Activated CD4-positive, alpha-beta memory T cell treated with anti-CD3 and anti-CD28 coated beads, Interleukin-2, amount 10 ng/mL, durations not matched to agents 7 days and 5 days (primary cell): ENCODE measurements at regions of chr14 and their contacts with region 1.

Region 1: GRCh38 chr14:101809671-101810514 is 48.4 kb downstream of the PPP2R5C start:
- DNase-seq: peak; percentile 90
- H3K4me3 Mint-ChIP-seq: peak overlapping the region; percentile 83
- H3K27ac Mint-ChIP-seq: peak overlapping the region; percentile 96
- H3K4me1 Mint-ChIP-seq: peaks cover 48% of the 10 kb centered on the region
- H3K27me3 Mint-ChIP-seq: no peaks in the 10 kb centered on the region

Region 2: GRCh38 chr14:101707068-101707842 is 102.6 kb before region 1 on chr14:
- CTCF ChIA-PET with region 1: interaction called, 18 read pairs
- POLR2A ChIA-PET with region 1: interaction called, 54 read pairs
- DNase-seq: peak; percentile 68
- H3K4me3 Mint-ChIP-seq: no peak overlapping the region
- H3K27ac Mint-ChIP-seq: peak overlapping the region; percentile 73
- H3K4me1 Mint-ChIP-seq: peaks cover 45% of the 10 kb centered on the region
- H3K27me3 Mint-ChIP-seq: peaks cover 15% of the 10 kb centered on the region

Region 3: GRCh38 chr14:101761032-101761880 is 48.6 kb before region 1 on chr14 and contains the start of gene PPP2R5C:
- CTCF ChIA-PET with region 1: interaction called, 5 read pairs
- POLR2A ChIA-PET with region 1: interaction called, 39 read pairs
- DNase-seq: peak; percentile 88
- H3K4me3 Mint-ChIP-seq: peak within 1 kb of the TSS; percentile 83
- H3K27ac Mint-ChIP-seq: peak within 1 kb of the TSS; percentile 73
- H3K4me1 Mint-ChIP-seq: peaks cover 39% of the 10 kb centered on the region
- H3K27me3 Mint-ChIP-seq: peaks cover 12% of the 10 kb centered on the region
- total RNA-seq, gene PPP2R5C: 338 to 348 TPM

Region 4: GRCh38 chr14:101791919-101792572 is 17.8 kb before region 1 on chr14:
- CTCF ChIA-PET with region 1: interaction called, 5 read pairs
- POLR2A ChIA-PET with region 1: interaction called, 85 read pairs
- DNase-seq: no peak
- H3K4me3 Mint-ChIP-seq: peak overlapping the region; percentile 47
- H3K27ac Mint-ChIP-seq: peak overlapping the region; percentile 41
- H3K4me1 Mint-ChIP-seq: peaks cover 21% of the 10 kb centered on the region
- H3K27me3 Mint-ChIP-seq: no peaks in the 10 kb centered on the region

Region 5: DNA sequence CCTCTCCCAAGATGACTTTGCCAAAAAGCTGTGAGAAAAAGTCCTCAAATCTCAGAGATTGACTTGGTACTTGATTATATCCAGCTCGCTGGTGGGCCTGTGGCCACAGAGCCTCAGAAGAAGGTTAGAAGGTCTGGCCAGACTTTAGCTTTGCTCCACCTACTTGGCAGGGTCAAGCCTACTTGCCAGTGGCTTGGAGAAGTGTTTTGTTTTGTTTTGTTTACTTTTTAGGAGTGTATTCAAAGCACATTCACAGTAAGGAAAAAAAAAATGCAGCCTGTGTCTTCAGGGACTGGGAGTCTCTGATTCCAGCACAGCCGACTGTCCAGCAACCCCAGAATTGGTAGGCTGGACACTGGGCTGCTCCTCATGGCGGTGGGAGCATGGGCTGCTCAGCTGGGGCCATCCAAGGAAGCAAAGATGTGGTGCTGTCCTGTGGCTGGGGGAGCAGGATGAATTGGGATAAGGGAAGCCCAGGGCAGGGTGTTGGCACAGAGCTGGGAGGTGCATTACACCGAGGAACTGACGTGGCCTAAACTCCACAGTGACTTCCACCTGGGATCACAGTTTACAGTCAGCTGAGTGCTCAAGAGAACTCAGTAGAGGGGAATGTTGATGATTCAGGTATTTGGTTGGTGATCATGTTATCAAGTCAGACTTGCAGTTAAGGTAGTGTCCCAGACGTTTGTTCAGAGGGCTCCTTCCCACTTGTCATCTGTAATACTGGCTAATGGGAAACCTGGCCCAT is 25.1 kb after region 1 on chr14:
- CTCF ChIA-PET with region 1: interaction called, 3 read pairs
- POLR2A ChIA-PET with region 1: interaction called, 17 read pairs
- DNase-seq: no peak
- H3K4me3 Mint-ChIP-seq: no peak overlapping the region
- H3K27ac Mint-ChIP-seq: no peak overlapping the region
- H3K4me1 Mint-ChIP-seq: peaks cover 78% of the 10 kb centered on the region
- H3K27me3 Mint-ChIP-seq: no peaks in the 10 kb centered on the region

Region 6: GRCh38 chr14:101947906-101948665 is 138.2 kb after region 1 on chr14:
- CTCF ChIA-PET with region 1: no interaction called
- POLR2A ChIA-PET with region 1: interaction called, 15 read pairs
- DNase-seq: peak; percentile 100
- H3K4me3 Mint-ChIP-seq: peak overlapping the region; percentile 89
- H3K27ac Mint-ChIP-seq: peak overlapping the region; percentile 85
- H3K4me1 Mint-ChIP-seq: peaks cover 26% of the 10 kb centered on the region
- H3K27me3 Mint-ChIP-seq: peaks cover 18% of the 10 kb centered on the region

Region 7: GRCh38 chr14:102096214-102097114 is 286.6 kb after region 1 on chr14:
- CTCF ChIA-PET with region 1: no interaction called
- POLR2A ChIA-PET with region 1: no interaction called
- DNase-seq: peak; percentile 73
- H3K4me3 Mint-ChIP-seq: no peak overlapping the region
- H3K27ac Mint-ChIP-seq: no peak overlapping the region
- H3K4me1 Mint-ChIP-seq: peaks cover 11% of the 10 kb centered on the region
- H3K27me3 Mint-ChIP-seq: no peaks in the 10 kb centered on the region